ENCODE measurements at regions of chr7 and their contacts with region 1.

Region 1: GRCh38 chr7:156969972-156970420 is 20.5 kb downstream of the NOM1 start:
- DNase-seq: peak; percentile 23
- ATAC-seq: peak; percentile 31
- H3K4me3 ChIP-seq: no peak overlapping the region
- H3K4me3 Mint-ChIP-seq: no peak overlapping the region
- H3K27ac ChIP-seq: no peak overlapping the region
- H3K27ac Mint-ChIP-seq: no peak overlapping the region
- H3K4me1 ChIP-seq: no peaks in the 10 kb centered on the region
- H3K4me1 Mint-ChIP-seq: no peaks in the 10 kb centered on the region
- H3K27me3 ChIP-seq: no peaks in the 10 kb centered on the region
- H3K27me3 Mint-ChIP-seq: no peaks in the 10 kb centered on the region
- CTCF ChIP-seq: peak; percentile 57

Region 2: GRCh38 chr7:157273208-157274093 is 303.5 kb after region 1 on chr7:
- CTCF ChIA-PET with region 1: interaction called, 8 read pairs
- POLR2A ChIA-PET with region 1: no interaction called
- intact Hi-C with region 1: loop called (anchors 2 kb)
- DNase-seq: peak; percentile 72
- ATAC-seq: peak; percentile 96
- H3K4me3 ChIP-seq: no peak overlapping the region
- H3K4me3 Mint-ChIP-seq: no peak overlapping the region
- H3K27ac ChIP-seq: no peak overlapping the region
- H3K27ac Mint-ChIP-seq: no peak overlapping the region
- H3K4me1 ChIP-seq: peaks cover 0 to 8% of the 10 kb centered on the region in 2 donors
- H3K4me1 Mint-ChIP-seq: peaks cover 3% of the 10 kb centered on the region
- H3K27me3 ChIP-seq: peaks cover 0 to 10% (median 0%) of the 10 kb centered on the region in 4 experiments
- H3K27me3 Mint-ChIP-seq: peaks cover 3% of the 10 kb centered on the region
- CTCF ChIP-seq: peak; percentile 96

Region 3: GRCh38 chr7:157386979-157387800 is 417.2 kb after region 1 on chr7:
- CTCF ChIA-PET with region 1: interaction called, 12 read pairs
- POLR2A ChIA-PET with region 1: no interaction called
- intact Hi-C with region 1: loop called (anchors 5 kb)
- DNase-seq: peak; percentile 84
- ATAC-seq: peak; percentile 85
- H3K4me3 ChIP-seq: no peak overlapping the region
- H3K4me3 Mint-ChIP-seq: peak overlapping the region; percentile 58
- H3K27ac ChIP-seq: peak overlapping the region; percentile 25 to 74
- H3K27ac Mint-ChIP-seq: peak overlapping the region; percentile 72
- H3K4me1 ChIP-seq: peaks cover 4 to 20% of the 10 kb centered on the region in 2 donors
- H3K4me1 Mint-ChIP-seq: peaks cover 8% of the 10 kb centered on the region
- H3K27me3 ChIP-seq: no peaks in the 10 kb centered on the region
- H3K27me3 Mint-ChIP-seq: no peaks in the 10 kb centered on the region
- CTCF ChIP-seq: peak; percentile 92

Measured in B cell (primary cell).